Activated T-helper 1 cell treated with anti-CD3 and anti-CD28 coated beads, Interleukin-12 subunit alpha, Interleukin-12 subunit beta, Interleukin-2, Interleukin-4 antibody, amounts not matched to agents 30 ng/mL and 10 ng/mL and 1 ng/mL, durations not matched to agents 14 hours and 24 hours and 36 hours (primary cell): ENCODE measurements at regions of chr15 and their contacts with region 1.

Region 1: DNA sequence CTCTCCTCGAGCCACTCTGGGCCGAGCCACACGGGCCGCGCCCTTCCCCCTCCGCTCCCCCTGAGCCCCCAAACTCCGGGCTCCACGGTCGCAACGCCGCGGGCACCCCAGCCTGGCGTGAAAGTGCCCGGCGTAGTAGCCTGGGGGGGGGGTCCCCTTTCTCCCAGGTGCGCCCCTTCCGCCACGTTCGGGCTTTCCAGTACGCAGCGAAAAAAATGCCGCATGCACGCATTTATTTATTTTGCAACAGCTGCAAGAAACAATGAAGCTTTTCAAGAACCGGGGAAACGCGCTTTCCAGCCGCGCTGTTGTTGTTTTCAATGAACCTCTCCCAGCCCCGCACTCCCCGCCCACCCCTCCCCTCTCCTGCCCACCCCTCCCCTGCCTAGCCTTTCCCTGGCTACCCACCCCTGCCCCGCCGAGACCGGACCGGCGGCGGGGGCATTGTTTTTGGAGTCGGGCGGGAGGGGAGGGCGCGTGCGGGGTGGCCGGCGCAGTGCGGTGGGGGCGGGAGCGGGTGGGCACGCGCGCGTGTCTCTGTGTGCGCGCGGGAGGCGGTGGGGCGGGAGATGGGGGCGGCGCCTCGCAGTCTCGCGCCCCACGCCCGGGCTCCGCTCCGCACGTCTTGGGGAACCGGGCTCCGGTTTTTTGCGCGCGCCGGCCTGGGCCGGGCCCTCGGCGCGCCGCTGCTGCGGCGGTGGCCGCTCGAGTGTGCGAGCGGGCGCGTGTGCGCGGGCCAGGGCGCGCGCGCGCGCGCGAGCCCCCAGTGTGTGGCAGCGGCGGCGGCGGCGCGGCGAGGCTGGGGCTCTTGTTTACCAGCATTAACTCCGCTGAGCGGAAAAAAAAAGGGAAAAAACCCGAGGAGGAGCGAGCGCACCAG is at the start of gene IGF1R:
- DNase-seq: peak; percentile 87
- H3K4me3 Mint-ChIP-seq: peak within 1 kb of the TSS; percentile 85
- H3K27ac Mint-ChIP-seq: peak within 1 kb of the TSS; percentile 93
- H3K4me1 Mint-ChIP-seq: peaks cover 34% of the 10 kb centered on the region
- H3K27me3 Mint-ChIP-seq: peaks cover 56% of the 10 kb centered on the region
- total RNA-seq, gene IGF1R: 38.7 and 39.8 TPM in 2 replicates

Region 2: DNA sequence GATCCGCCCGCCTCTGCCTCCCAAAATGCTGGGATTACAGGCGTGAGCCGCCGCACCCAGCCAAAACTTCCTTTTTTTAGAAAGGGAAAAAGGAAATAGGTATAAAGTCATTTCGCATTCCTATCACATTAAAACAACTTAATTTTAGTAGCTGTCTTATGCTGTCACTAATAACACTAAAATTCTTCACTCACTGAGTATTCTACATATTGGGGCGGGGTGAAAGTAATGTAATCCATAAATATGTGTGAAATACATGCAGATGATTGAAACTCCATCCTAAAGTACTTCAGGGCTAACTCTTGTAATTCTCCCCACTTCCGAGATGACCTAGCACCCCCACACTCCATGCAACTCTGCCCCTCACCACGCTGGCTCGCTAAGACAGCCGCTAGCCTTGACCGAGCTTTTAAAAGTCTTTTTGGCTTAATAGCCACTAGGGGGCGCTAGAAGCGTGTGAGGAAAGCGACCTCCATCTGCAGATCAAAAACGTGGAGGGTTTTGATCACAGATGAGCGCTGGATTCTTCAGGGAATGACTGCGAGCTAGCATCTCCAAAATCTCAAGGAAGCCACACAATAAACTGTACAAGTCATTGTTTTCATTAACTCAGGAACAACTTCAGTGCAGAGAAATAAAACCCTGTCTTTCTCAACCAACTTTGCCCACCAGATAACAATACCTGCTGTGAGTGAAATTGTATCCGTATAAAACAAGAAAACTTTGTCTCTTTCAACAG is 129.0 kb before region 1 on chr15:
- intact Hi-C with region 1: loop called (anchors 1 kb)
- DNase-seq: peak; percentile 14
- H3K4me3 Mint-ChIP-seq: no peak overlapping the region
- H3K27ac Mint-ChIP-seq: no peak overlapping the region
- H3K4me1 Mint-ChIP-seq: peaks cover 6% of the 10 kb centered on the region
- H3K27me3 Mint-ChIP-seq: peaks cover 7% of the 10 kb centered on the region

Region 3: GRCh38 chr15:98668566-98669308 is 20.7 kb after region 1 on chr15:
- intact Hi-C with region 1: loop called (anchors 1 kb)
- DNase-seq: peak; percentile 44
- H3K4me3 Mint-ChIP-seq: peak overlapping the region; percentile 40
- H3K27ac Mint-ChIP-seq: peak overlapping the region; percentile 0
- H3K4me1 Mint-ChIP-seq: peaks cover 57% of the 10 kb centered on the region
- H3K27me3 Mint-ChIP-seq: no peaks in the 10 kb centered on the region

Region 4: DNA sequence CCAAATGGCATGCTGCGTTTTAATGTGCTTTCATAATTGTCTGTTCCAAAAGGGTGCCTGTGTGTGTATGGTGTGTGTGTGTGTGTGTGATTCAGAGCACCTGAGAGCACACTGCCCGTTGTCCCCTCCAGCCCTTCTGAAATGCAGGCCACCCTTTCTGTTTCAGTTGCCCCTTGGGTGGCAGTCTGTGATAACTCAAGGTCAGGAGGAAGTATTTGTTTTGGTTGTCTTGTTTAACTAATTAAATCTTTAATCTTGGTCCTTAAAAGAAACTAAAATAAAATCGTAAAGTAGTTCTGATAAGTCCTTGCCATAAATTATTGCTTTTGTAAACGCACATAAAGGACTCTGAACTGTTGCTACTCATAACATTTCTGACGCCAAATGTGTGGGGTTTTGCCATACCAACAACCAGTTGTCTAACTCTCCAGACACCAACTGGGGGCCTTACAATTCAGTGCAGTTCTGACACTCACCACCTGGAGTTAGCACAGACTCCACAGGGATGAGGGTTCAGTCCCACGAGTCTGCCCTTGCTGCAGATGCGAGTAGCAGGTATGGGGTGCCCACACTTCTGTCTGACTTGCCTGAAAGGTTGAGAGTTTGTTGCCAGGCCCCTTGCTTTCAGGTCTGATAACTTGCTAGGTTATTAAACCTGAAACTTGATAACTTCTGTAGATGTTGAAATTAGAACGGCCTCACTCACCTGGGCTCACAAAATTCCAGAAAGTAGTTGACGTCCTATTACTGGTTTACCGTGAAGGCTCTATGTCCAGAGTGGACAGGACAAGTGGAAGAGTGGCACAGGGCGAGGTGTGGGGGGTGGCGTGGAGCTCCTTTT is 157.6 kb after region 1 on chr15:
- intact Hi-C with region 1: no loop called
- DNase-seq: no peak
- H3K4me3 Mint-ChIP-seq: no peak overlapping the region
- H3K27ac Mint-ChIP-seq: no peak overlapping the region
- H3K4me1 Mint-ChIP-seq: peaks cover 8% of the 10 kb centered on the region
- H3K27me3 Mint-ChIP-seq: peaks cover 2% of the 10 kb centered on the region

Region 5: GRCh38 chr15:98853161-98853560 is 205.1 kb after region 1 on chr15:
- intact Hi-C with region 1: loop called (anchors 1 kb)
- DNase-seq: peak; percentile 72
- H3K4me3 Mint-ChIP-seq: peak overlapping the region; percentile 94
- H3K27ac Mint-ChIP-seq: peak overlapping the region; percentile 99
- H3K4me1 Mint-ChIP-seq: peaks cover 45% of the 10 kb centered on the region
- H3K27me3 Mint-ChIP-seq: no peaks in the 10 kb centered on the region

Region 6: GRCh38 chr15:99076552-99077308 is 428.7 kb after region 1 on chr15:
- intact Hi-C with region 1: loop called (anchors 5 kb)
- DNase-seq: peak; percentile 31
- H3K4me3 Mint-ChIP-seq: peak overlapping the region; percentile 77
- H3K27ac Mint-ChIP-seq: no peak overlapping the region
- H3K4me1 Mint-ChIP-seq: peaks cover 7% of the 10 kb centered on the region
- H3K27me3 Mint-ChIP-seq: peaks cover 11% of the 10 kb centered on the region

Region 7: GRCh38 chr15:100170291-100171210 is 1522.5 kb after region 1 on chr15:
- intact Hi-C with region 1: loop called (anchors 5 kb)
- DNase-seq: peak; percentile 43
- H3K4me3 Mint-ChIP-seq: no peak overlapping the region
- H3K27ac Mint-ChIP-seq: peak overlapping the region; percentile 83
- H3K4me1 Mint-ChIP-seq: peaks cover 15% of the 10 kb centered on the region
- H3K27me3 Mint-ChIP-seq: peaks cover 1% of the 10 kb centered on the region